Endothelial cell of umbilical vein (primary cell): ENCODE measurements at regions of chr17 and their contacts with region 1.

Region 1: DNA sequence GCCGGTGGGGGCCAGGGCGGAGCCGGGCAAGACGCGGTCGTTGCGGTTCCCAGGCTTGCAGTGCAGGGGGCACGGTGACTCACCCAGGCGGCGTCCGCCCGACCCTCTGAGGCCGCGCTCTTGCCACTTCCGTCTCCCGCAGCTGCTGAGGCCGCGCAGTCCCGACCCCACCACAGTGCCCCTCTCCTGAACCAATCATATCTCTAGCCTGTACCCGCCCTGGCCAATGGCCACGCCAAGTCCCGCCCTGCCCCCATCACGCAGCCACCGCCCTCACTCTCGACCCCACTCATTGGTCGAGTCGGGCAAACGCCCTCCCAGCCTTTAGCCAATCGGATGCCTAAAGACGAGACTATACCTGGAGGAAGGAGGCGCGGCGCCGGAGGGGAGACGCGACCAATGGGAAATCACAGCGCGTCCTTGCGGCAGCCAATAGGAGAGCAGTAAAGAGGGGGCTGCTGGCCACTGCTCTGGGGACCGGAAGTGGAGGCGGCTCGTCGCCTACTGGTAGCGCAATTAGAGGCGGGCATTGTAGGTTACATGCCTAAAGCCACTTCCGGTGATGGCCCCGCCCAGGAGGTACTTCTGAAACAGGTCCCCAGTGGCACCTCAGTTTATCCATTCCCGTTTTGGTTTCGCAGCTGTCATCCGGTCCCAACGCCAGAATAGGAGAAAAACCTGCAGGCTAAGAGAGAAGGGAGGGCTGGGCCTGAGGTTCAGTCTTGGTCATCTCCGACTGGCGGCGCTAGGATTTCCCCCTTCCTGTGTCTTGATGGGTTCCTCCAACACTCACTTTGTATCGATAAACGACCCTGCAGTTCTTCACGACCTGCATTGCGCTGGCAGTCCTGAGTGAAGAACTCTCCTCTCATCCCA is 3.5 kb upstream of the MTMR4 start:
- DNase-seq: peak; percentile 100
- H3K4me3 ChIP-seq: peak overlapping the region; percentile 29 to 73 (median 56)
- H3K27ac ChIP-seq: peak overlapping the region; percentile 81
- H3K4me1 ChIP-seq: peaks cover 18% of the 10 kb centered on the region
- H3K27me3 ChIP-seq: no peaks in the 10 kb centered on the region
- CTCF ChIP-seq: no peak
- POLR2A ChIP-seq: peak; percentile 71

Region 2: DNA sequence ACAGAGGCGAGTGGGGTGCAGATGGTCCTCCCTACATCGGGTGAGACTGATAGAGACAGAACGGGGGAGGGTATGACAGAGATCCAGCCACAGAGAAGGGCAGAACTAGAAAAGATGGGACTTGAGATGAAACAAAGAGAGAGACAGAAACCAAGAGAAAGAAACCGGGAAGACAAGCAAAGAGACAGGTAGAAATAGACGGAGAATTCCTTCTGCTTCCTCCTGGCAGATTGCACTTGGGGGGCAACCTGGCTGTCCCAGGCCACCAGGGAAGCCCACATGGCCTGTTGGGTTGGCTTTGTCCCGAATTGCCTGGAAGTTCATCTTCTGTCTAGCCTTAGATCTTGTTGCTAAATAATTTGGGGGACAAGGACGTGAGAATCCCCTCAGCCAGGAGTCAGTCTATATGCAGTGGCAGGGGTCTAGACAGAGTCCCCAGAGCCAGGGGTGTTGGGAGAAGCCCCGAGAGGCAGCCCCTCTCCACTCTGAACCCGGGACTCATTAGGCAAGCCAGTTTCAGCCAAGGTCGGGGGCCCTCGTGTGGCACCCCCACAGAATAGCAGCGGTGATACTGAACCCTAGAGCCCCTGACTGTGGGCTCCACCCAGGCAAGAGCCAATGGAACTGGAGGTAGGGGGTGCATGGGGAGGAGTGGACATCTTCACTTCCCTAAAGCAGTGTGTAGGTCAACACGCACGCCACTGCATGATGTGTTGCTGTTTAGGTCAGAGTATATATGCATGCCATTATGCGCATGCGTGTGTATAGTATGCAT is 188.8 kb before region 1 on chr17:
- CTCF ChIA-PET with region 1: no interaction called
- POLR2A ChIA-PET with region 1: no interaction called
- dilution Hi-C with region 1: no loop called
- intact Hi-C with region 1: no loop called
- DNase-seq: no peak
- H3K4me3 ChIP-seq: no peak overlapping the region
- H3K27ac ChIP-seq: no peak overlapping the region
- H3K4me1 ChIP-seq: no peaks in the 10 kb centered on the region
- H3K27me3 ChIP-seq: peaks cover 13 to 14% of the 10 kb centered on the region in 2 experiments
- CTCF ChIP-seq: peak in 1 of 2 donors; percentile 18
- POLR2A ChIP-seq: no peak

Region 3: DNA sequence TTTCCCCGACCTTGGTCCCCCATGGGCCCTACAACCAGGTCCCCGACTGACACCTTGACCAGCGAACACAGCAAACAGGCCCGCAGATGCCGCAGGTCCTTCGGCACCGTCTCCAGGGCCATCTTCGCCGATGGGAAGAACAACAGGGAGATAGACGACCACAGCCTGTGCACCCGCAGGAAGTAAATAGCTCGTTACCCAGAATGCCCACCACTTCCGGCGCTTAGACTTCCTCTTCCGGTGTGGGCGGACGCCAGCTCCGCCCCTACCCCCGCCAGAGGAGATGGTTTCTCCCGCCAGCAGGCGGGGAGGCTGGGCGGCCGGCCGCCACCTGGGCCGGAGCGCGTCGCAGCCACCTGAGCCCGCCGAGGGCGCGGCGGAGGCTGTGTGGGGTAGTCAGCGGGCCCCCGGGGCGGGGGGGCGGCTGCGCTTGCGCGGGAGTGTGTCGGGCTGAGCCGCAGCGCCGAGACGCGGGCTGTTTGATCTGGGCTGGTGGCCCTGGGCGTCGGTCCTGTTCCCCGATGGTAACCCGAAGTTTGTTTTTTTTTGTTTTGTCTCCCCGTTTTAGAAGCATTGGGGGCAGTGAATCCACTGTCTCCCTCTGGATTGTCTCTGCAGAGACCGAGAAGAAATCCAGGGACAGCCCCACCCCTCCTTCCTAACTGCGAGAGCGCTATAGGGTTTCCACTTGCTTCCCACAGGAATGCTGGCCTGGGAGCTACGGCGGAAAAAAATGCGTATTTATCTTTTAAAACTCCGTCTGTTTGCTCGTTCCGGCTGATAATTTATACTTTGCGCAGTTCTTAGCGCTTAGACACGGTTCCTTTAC is 165.7 kb before region 1 on chr17 and contains the start of gene SUPT4H1:
- CTCF ChIA-PET with region 1: no interaction called
- POLR2A ChIA-PET with region 1: no interaction called
- dilution Hi-C with region 1: no loop called
- intact Hi-C with region 1: loop called (anchors 1 kb)
- DNase-seq: peak; percentile 89
- H3K4me3 ChIP-seq: peak within 1 kb of the TSS; percentile 71 to 87 (median 86)
- H3K27ac ChIP-seq: peak within 1 kb of the TSS; percentile 49
- H3K4me1 ChIP-seq: peaks cover 4% of the 10 kb centered on the region
- H3K27me3 ChIP-seq: no peaks in the 10 kb centered on the region
- CTCF ChIP-seq: no peak
- POLR2A ChIP-seq: peak; percentile 97
- total RNA-seq, gene SUPT4H1: 70.9 and 77.5 TPM in 2 replicates

Region 4: GRCh38 chr17:58364270-58364942 is 153.6 kb before region 1 on chr17:
- CTCF ChIA-PET with region 1: no interaction called
- POLR2A ChIA-PET with region 1: no interaction called
- dilution Hi-C with region 1: no loop called
- intact Hi-C with region 1: no loop called
- DNase-seq: no peak
- H3K4me3 ChIP-seq: no peak overlapping the region
- H3K27ac ChIP-seq: no peak overlapping the region
- H3K4me1 ChIP-seq: no peaks in the 10 kb centered on the region
- H3K27me3 ChIP-seq: peaks cover 0 to 6% of the 10 kb centered on the region in 2 experiments
- CTCF ChIP-seq: no peak
- POLR2A ChIP-seq: no peak

Region 5: GRCh38 chr17:58587702-58588254 is 69.8 kb after region 1 on chr17:
- CTCF ChIA-PET with region 1: interaction called, 56 read pairs
- POLR2A ChIA-PET with region 1: no interaction called
- dilution Hi-C with region 1: no loop called
- intact Hi-C with region 1: loop called (anchors 2 kb)
- DNase-seq: peak; percentile 68
- H3K4me3 ChIP-seq: no peak overlapping the region
- H3K27ac ChIP-seq: no peak overlapping the region
- H3K4me1 ChIP-seq: no peaks in the 10 kb centered on the region
- H3K27me3 ChIP-seq: peaks cover 3 to 7% of the 10 kb centered on the region in 2 experiments
- CTCF ChIP-seq: peak; percentile 92 to 95
- POLR2A ChIP-seq: no peak

Region 6: DNA sequence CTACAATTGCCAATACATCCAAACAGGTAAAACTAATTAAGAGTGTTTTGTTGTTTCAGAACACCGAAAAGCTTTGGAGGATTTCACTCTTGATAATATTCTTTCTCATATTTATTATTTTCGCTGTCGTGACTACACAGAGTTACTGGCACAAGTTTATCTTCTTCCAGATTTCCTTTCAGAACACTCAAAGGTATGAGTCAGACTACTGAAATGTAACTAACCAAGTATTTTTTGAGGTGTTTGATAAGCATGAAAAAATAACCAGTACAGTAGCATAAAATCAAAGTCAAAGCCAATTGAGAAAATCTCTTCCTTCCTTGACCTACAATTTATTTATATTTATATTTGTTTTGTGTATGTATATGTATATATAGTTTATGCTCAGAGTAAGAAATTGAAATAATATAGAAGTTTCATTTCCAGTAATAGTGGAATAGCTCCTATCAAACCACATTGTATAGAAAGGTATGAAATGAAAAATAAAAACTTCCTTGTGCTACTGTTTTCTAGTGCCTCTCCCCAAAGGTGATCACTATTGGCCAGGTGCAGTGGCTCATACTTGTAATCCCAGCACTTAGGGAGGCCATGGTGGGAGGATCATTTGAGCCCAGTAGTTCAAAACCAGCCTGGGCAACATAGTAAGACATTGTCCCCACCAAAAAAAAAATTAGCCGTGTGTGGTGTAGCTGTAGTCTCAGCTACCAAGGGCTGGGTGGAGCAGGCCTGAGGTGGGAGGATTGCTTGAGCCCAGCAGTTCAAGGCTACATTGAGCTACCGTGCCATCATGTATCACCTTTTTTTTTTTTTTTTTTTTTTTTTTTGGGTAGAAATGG is 185.4 kb after region 1 on chr17:
- CTCF ChIA-PET with region 1: interaction called, 4 read pairs
- POLR2A ChIA-PET with region 1: no interaction called
- dilution Hi-C with region 1: no loop called
- intact Hi-C with region 1: loop called (anchors 2 kb)
- DNase-seq: peak; percentile 86
- H3K4me3 ChIP-seq: peak overlapping the region in 1 of 3 experiments; percentile 15
- H3K27ac ChIP-seq: peak overlapping the region; percentile 97
- H3K4me1 ChIP-seq: peaks cover 18% of the 10 kb centered on the region
- H3K27me3 ChIP-seq: no peaks in the 10 kb centered on the region
- CTCF ChIP-seq: no peak
- POLR2A ChIP-seq: peak; percentile 40

Region 7: GRCh38 chr17:59004338-59005111 is 486.6 kb after region 1 on chr17:
- CTCF ChIA-PET with region 1: interaction called, 88 read pairs
- POLR2A ChIA-PET with region 1: interaction called, 3 read pairs
- dilution Hi-C with region 1: no loop called
- intact Hi-C with region 1: loop called (anchors 1 kb)
- DNase-seq: peak; percentile 74
- H3K4me3 ChIP-seq: no peak overlapping the region
- H3K27ac ChIP-seq: no peak overlapping the region
- H3K4me1 ChIP-seq: peaks cover 30% of the 10 kb centered on the region
- H3K27me3 ChIP-seq: no peaks in the 10 kb centered on the region
- CTCF ChIP-seq: peak; percentile 69 to 79
- POLR2A ChIP-seq: no peak

Region 8: DNA sequence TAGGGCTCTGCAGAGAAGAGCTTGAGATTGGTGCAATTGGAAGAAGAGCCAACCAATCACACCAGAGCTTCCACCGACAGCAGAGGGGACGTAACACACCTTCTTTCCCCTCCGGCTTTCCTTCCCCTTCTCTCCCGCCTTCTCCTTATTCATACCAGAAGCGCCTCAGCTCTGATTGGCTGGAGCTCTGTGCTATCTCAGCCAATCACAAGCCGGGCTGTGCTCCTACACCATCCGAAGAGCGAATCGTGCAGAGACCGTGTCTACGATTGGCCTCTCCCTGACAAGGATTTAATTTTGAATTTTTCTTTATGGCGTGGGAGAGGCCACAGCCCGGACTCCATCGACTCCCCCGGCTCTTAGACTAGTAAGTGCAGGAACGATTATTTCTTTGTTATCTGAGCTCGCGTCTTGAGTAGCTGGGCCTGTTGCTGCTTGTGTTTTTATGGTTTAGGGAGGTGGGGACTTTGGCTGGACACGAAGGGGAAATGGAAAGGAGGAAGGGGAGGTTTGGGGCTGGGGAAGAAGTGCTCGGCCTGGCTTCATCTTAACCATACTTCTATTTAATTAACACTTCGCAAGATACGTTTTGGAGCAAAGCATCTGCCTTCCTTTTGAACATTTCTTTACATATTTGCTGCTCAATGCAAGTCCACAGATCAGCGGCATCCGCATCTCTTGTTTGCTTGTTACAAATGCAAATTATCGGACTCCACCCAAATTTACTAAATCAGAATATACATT is 637.6 kb after region 1 on chr17 and contains the start of gene PRR11:
- CTCF ChIA-PET with region 1: no interaction called
- POLR2A ChIA-PET with region 1: no interaction called
- dilution Hi-C with region 1: no loop called
- intact Hi-C with region 1: loop called (anchors 1 kb)
- DNase-seq: peak; percentile 100
- H3K4me3 ChIP-seq: peak within 1 kb of the TSS; percentile 67 to 97 (median 93)
- H3K27ac ChIP-seq: peak within 1 kb of the TSS; percentile 79
- H3K4me1 ChIP-seq: peaks cover 51% of the 10 kb centered on the region
- H3K27me3 ChIP-seq: no peaks in the 10 kb centered on the region
- CTCF ChIP-seq: no peak
- POLR2A ChIP-seq: no peak
- total RNA-seq, gene PRR11: 82.1 and 86.3 TPM in 2 replicates